MCF 10A (cell line): ENCODE measurements at regions of chr10 and their contacts with region 1.

Region 1: DNA sequence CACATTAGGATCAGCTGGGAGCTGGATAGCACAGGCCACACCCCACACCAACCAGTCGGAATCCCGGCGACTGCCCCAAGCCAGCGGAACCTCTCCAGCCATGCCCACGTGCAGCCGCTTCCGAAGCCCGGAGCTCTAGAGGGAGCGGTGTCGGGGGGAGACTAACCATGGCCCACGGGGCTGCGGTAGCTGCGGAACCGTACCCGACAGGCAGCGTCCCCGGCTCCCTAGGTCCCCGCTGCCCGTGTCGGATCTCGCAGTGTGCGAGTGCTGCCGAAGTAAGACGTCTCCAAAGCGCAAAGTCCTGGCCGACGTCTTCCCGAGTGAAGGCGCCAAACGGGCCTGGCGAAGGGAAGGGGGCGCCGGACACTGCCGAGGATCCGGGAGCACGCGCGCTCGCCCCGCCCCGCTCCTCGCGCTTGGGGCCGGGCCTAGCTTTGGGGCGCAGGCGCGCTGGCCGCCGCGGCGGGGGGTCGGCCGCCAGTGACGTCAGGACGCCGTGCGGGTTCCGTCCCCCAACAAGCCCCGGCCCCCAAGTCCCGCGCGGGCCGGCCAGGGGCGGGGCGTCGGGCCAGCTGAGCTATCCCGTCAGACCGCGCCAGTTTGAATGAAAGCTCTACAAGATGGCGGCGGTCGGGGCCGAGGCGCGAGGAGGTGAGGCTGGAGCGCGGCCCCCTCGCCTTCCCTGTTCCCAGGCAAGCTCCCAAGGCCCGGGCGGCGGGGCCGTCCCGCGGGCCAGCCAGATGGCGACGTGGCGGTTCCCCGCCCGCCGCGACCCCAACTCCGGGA is at the start of gene SUV39H2:
- DNase-seq: peak; percentile 95
- H3K4me3 Mint-ChIP-seq: peak within 1 kb of the TSS; percentile 79
- H3K27ac Mint-ChIP-seq: peak within 1 kb of the TSS; percentile 82
- H3K4me1 Mint-ChIP-seq: peaks cover 27% of the 10 kb centered on the region
- H3K27me3 Mint-ChIP-seq: no peaks in the 10 kb centered on the region
- CTCF ChIP-seq: no peak
- total RNA-seq, gene SUV39H2: 14.9 and 16.0 TPM in 2 replicates

Region 2: GRCh38 chr10:14855453-14855852 is 23.0 kb before region 1 on chr10:
- CTCF ChIA-PET with region 1: interaction called, 3 read pairs
- POLR2A ChIA-PET with region 1: interaction called, 6 read pairs
- intact Hi-C with region 1: loop called (anchors 2 kb)
- DNase-seq: no peak
- H3K4me3 Mint-ChIP-seq: no peak overlapping the region
- H3K27ac Mint-ChIP-seq: no peak overlapping the region
- H3K4me1 Mint-ChIP-seq: no peaks in the 10 kb centered on the region
- H3K27me3 Mint-ChIP-seq: no peaks in the 10 kb centered on the region
- CTCF ChIP-seq: no peak

Region 3: DNA sequence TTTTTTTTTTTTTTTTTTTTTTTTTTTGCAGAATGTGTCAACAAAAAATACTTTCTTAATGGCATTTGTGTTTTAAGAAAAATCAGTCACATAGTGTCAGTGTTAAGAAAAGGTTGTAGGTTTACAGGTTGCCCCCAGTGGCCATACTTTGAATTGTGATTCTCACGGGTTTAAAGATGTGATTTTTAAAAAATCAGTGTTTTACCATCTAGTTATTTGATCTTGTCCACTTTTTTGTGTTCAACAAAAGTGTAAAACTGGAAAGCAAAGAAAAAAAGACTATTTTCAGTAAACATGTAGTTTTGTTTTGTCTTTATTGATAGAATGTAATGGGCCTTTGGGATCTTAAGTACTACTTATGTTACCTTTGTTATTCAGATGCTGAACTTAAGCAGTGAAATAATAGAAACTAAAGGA is 25.9 kb after region 1 on chr10:
- CTCF ChIA-PET with region 1: interaction called, 18 read pairs
- POLR2A ChIA-PET with region 1: interaction called, 17 read pairs
- intact Hi-C with region 1: no loop called
- DNase-seq: peak; percentile 39
- H3K4me3 Mint-ChIP-seq: no peak overlapping the region
- H3K27ac Mint-ChIP-seq: no peak overlapping the region
- H3K4me1 Mint-ChIP-seq: no peaks in the 10 kb centered on the region
- H3K27me3 Mint-ChIP-seq: no peaks in the 10 kb centered on the region
- CTCF ChIP-seq: peak; percentile 39

Region 4: DNA sequence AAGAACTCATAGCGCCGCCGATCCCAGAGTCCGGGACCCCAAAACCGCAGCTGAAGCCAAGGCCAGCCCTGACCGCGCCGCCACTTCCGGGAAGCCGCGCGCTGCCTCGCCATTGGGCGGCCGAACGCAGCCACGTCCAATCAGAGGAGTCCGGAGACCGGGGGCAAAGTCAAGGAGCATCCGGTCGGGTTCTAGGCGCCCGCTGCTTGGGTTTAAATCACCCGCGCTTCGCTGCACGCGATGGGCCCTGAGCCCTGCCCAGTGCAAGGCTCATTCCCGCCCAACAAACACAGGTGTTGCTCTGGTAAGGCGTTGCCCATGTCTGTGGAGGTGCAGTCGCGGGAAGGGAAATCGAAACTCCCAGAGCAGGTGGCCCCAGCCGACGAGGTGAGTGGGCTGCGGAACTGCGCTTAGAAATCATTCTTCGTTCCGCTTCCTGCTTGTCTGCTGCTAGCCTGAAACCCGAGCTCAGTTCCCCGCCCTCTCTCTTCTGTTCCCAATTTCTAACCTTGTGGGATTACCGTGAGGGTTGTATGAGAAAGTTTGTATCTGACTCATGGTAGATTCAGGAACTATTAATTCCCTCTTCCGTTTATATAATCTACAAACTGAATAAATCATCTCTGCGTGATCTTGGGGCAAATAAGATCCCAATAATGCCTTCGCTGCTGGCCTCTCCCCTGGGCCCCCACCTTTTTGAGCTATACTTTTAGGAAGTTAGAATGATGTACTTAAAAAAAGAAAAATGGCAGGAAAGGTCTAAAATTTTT is 75.7 kb after region 1 on chr10 and contains the start of gene DCLRE1C:
- CTCF ChIA-PET with region 1: interaction called, 6 read pairs
- POLR2A ChIA-PET with region 1: interaction called, 62 read pairs
- intact Hi-C with region 1: no loop called
- DNase-seq: peak; percentile 92
- H3K4me3 Mint-ChIP-seq: peak within 1 kb of the TSS; percentile 92
- H3K27ac Mint-ChIP-seq: peak within 1 kb of the TSS; percentile 90
- H3K4me1 Mint-ChIP-seq: peaks cover 5% of the 10 kb centered on the region
- H3K27me3 Mint-ChIP-seq: no peaks in the 10 kb centered on the region
- CTCF ChIP-seq: no peak
- total RNA-seq, gene DCLRE1C: 10.3 and 11.5 TPM in 2 replicates

Region 5: DNA sequence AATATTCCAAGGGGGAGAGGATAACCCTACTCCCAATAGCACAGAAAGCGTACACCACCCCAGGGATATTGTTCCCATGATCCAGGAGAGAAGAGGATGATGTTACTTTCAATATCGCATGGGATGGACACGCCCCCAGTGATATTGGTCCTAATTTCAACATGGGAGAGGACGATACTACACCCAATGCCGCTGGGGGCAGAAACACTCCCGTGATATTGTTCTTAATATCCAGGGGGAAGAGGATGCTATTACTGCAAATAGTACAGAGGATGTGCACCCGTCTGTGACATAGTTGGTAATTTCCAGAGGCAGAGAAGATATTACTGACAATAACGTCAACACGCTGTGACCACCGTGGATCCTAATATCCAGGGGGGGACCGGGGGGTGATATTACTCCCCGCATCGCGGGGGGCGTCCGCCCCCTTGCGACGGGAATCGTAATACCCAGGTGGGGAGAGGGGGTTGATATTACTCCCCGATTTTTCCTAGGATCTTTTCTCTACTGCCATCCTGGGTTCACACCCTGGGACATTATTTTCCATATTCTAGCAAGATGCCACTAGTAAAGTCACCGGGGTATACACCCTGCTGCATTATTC is 97.3 kb after region 1 on chr10:
- CTCF ChIA-PET with region 1: no interaction called
- POLR2A ChIA-PET with region 1: no interaction called
- intact Hi-C with region 1: no loop called
- DNase-seq: peak; percentile 14
- H3K4me3 Mint-ChIP-seq: peak overlapping the region; percentile 48
- H3K27ac Mint-ChIP-seq: peak overlapping the region; percentile 63
- H3K4me1 Mint-ChIP-seq: peaks cover 9% of the 10 kb centered on the region
- H3K27me3 Mint-ChIP-seq: no peaks in the 10 kb centered on the region
- CTCF ChIP-seq: peak; percentile 29

Region 6: GRCh38 chr10:15106352-15107013 is 228.0 kb after region 1 on chr10:
- CTCF ChIA-PET with region 1: interaction called, 12 read pairs
- POLR2A ChIA-PET with region 1: interaction called, 7 read pairs
- intact Hi-C with region 1: loop called (anchors 5 kb)
- DNase-seq: peak; percentile 79
- H3K4me3 Mint-ChIP-seq: no peak overlapping the region
- H3K27ac Mint-ChIP-seq: no peak overlapping the region
- H3K4me1 Mint-ChIP-seq: no peaks in the 10 kb centered on the region
- H3K27me3 Mint-ChIP-seq: no peaks in the 10 kb centered on the region
- CTCF ChIP-seq: peak; percentile 83